MCF 10A (cell line): ENCODE measurements at regions of chr7 and their contacts with region 1.

Region 1: DNA sequence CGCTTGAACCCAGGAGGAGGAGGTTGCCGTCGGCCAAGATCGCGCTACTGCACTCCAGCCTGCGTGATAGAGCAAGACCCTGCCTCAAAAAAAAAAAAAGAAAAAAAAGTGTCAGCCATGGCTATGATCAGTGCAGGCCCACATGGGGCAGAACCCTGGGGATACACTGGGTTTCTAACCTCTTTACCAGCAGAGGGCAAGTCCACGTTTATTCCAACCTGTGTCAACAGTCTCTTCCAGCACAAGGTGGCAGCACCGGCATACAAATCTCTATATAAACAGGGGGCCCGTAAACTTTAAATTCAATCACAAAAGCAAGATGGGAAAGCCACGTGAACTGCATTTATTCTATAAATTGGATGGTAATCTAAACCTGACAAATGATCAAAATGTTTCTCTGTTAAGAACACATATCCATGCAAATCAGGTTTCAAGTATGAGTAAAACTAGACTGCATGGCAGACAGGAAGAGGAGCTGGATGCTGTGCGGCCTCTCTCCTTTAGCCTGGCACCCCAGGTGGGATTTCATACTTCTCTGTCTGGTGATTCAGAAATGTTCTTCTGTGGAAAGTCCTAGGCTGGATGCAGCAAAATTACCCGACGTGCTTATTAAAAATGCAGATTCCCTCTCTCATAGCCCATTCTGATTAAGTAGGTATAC is 60.0 kb upstream of the STEAP1B start:
- DNase-seq: peak; percentile 85
- H3K4me3 Mint-ChIP-seq: no peak overlapping the region
- H3K27ac Mint-ChIP-seq: no peak overlapping the region
- H3K4me1 Mint-ChIP-seq: peaks cover 25% of the 10 kb centered on the region
- H3K27me3 Mint-ChIP-seq: peaks cover 7% of the 10 kb centered on the region
- CTCF ChIP-seq: peak; percentile 85

Region 2: GRCh38 chr7:22589641-22590201 is 29.8 kb after region 1 on chr7:
- CTCF ChIA-PET with region 1: interaction called, 10 read pairs
- POLR2A ChIA-PET with region 1: no interaction called
- intact Hi-C with region 1: no loop called
- DNase-seq: peak; percentile 79
- H3K4me3 Mint-ChIP-seq: no peak overlapping the region
- H3K27ac Mint-ChIP-seq: no peak overlapping the region
- H3K4me1 Mint-ChIP-seq: peaks cover 51% of the 10 kb centered on the region
- H3K27me3 Mint-ChIP-seq: no peaks in the 10 kb centered on the region
- CTCF ChIP-seq: no peak

Region 3: GRCh38 chr7:22718200-22718711 is 158.3 kb after region 1 on chr7:
- CTCF ChIA-PET with region 1: interaction called, 544 read pairs
- POLR2A ChIA-PET with region 1: no interaction called
- intact Hi-C with region 1: no loop called
- DNase-seq: peak; percentile 83
- H3K4me3 Mint-ChIP-seq: peak overlapping the region; percentile 10
- H3K27ac Mint-ChIP-seq: peak overlapping the region; percentile 96
- H3K4me1 Mint-ChIP-seq: peaks cover 36% of the 10 kb centered on the region
- H3K27me3 Mint-ChIP-seq: no peaks in the 10 kb centered on the region
- CTCF ChIP-seq: no peak

Region 4: GRCh38 chr7:22732556-22733126 is 172.7 kb after region 1 on chr7:
- CTCF ChIA-PET with region 1: interaction called, 544 read pairs
- POLR2A ChIA-PET with region 1: interaction called, 52 read pairs
- intact Hi-C with region 1: loop called (anchors 1 kb)
- DNase-seq: peak; percentile 50
- H3K4me3 Mint-ChIP-seq: no peak overlapping the region
- H3K27ac Mint-ChIP-seq: no peak overlapping the region
- H3K4me1 Mint-ChIP-seq: peaks cover 16% of the 10 kb centered on the region
- H3K27me3 Mint-ChIP-seq: peaks cover 10% of the 10 kb centered on the region
- CTCF ChIP-seq: peak; percentile 52

Region 5: GRCh38 chr7:22860784-22861482 is 301.0 kb after region 1 on chr7:
- CTCF ChIA-PET with region 1: no interaction called
- POLR2A ChIA-PET with region 1: no interaction called
- intact Hi-C with region 1: loop called (anchors 2 kb)
- DNase-seq: peak; percentile 48
- H3K4me3 Mint-ChIP-seq: no peak overlapping the region
- H3K27ac Mint-ChIP-seq: no peak overlapping the region
- H3K4me1 Mint-ChIP-seq: peaks cover 28% of the 10 kb centered on the region
- H3K27me3 Mint-ChIP-seq: no peaks in the 10 kb centered on the region
- CTCF ChIP-seq: peak; percentile 46